ENCODE measurements at regions of chr11 and their contacts with region 1.

Region 1: GRCh38 chr11:122853971-122854446 is 15.7 kb downstream of the CRTAM start:
- DNase-seq: no peak
- ATAC-seq: no peak
- H3K4me3 ChIP-seq: no peak overlapping the region
- H3K27ac ChIP-seq: no peak overlapping the region
- H3K4me1 ChIP-seq: peaks cover 24% of the 10 kb centered on the region
- H3K27me3 ChIP-seq: no peaks in the 10 kb centered on the region
- CTCF ChIP-seq: peak; percentile 53 to 78 (median 73)
- EP300 ChIP-seq: no peak
- POLR2A ChIP-seq: no peak
- RAD21 ChIP-seq: peak; percentile 87

Region 2: GRCh38 chr11:122743949-122744348 is 110.1 kb before region 1 on chr11:
- CTCF ChIA-PET with region 1: interaction called, 38 read pairs
- POLR2A ChIA-PET with region 1: no interaction called
- RAD21 ChIA-PET with region 1: interaction called, 8 read pairs
- SMC1A ChIA-PET with region 1: interaction called, 30 read pairs
- in situ Hi-C with region 1: no loop called
- intact Hi-C with region 1: no loop called
- DNase-seq: peak; percentile 55
- ATAC-seq: peak; percentile 40
- H3K4me3 ChIP-seq: no peak overlapping the region
- H3K27ac ChIP-seq: peak overlapping the region; percentile 25; the same call in 1 of the 2 replicates
- H3K4me1 ChIP-seq: peaks cover 35% of the 10 kb centered on the region
- H3K27me3 ChIP-seq: peaks cover 0 to 2% of the 10 kb centered on the region in 2 experiments; a peak in 1 of 4 replicates
- CTCF ChIP-seq: no peak
- EP300 ChIP-seq: no peak; a peak in 1 of 4 replicates
- POLR2A ChIP-seq: peak; percentile 65; the same call in 1 of the 2 replicates
- RAD21 ChIP-seq: no peak

Region 3: GRCh38 chr11:122796128-122796717 is 57.8 kb before region 1 on chr11:
- CTCF ChIA-PET with region 1: interaction called, 490 read pairs
- POLR2A ChIA-PET with region 1: interaction called, 23 read pairs
- RAD21 ChIA-PET with region 1: interaction called, 254 read pairs
- SMC1A ChIA-PET with region 1: interaction called, 294 read pairs
- in situ Hi-C with region 1: loop called (anchors 5 kb)
- intact Hi-C with region 1: loop called (anchors 1 kb)
- DNase-seq: no peak
- ATAC-seq: peak; percentile 98
- H3K4me3 ChIP-seq: no peak overlapping the region
- H3K27ac ChIP-seq: no peak overlapping the region
- H3K4me1 ChIP-seq: no peaks in the 10 kb centered on the region
- H3K27me3 ChIP-seq: no peaks in the 10 kb centered on the region
- CTCF ChIP-seq: peak; percentile 92 to 96 (median 93)
- EP300 ChIP-seq: no peak
- POLR2A ChIP-seq: no peak
- RAD21 ChIP-seq: peak; percentile 92

Region 4: GRCh38 chr11:122832721-122833470 is 21.1 kb before region 1 on chr11:
- CTCF ChIA-PET with region 1: interaction called, 108 read pairs
- POLR2A ChIA-PET with region 1: interaction called, 10 read pairs
- RAD21 ChIA-PET with region 1: interaction called, 74 read pairs
- SMC1A ChIA-PET with region 1: interaction called, 138 read pairs
- in situ Hi-C with region 1: no loop called
- intact Hi-C with region 1: no loop called
- DNase-seq: no peak
- ATAC-seq: peak; percentile 50
- H3K4me3 ChIP-seq: no peak overlapping the region
- H3K27ac ChIP-seq: no peak overlapping the region
- H3K4me1 ChIP-seq: no peaks in the 10 kb centered on the region
- H3K27me3 ChIP-seq: no peaks in the 10 kb centered on the region
- CTCF ChIP-seq: no peak
- EP300 ChIP-seq: no peak
- POLR2A ChIP-seq: no peak
- RAD21 ChIP-seq: no peak

Region 5: DNA sequence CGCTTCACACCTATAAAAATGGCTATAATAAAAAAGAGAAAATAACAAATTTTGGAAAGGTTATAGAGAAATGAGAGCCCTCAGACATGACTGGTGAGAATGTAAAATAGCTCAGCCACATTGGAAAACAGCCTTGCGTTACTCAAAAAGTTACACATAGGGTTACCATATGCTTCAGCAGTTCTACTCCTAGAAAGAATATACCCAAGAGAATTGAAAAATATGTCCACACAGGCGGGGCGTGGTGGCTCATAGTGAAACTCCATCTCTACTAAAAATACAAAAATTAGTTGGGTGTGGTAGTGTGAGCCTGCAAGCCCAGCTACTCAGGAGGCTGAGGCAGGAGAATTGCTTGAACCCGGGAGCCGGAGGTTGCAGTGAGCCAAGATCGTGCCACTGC is 21.0 kb after region 1 on chr11:
- CTCF ChIA-PET with region 1: interaction called, 275 read pairs
- POLR2A ChIA-PET with region 1: interaction called, 12 read pairs
- RAD21 ChIA-PET with region 1: interaction called, 46 read pairs
- SMC1A ChIA-PET with region 1: interaction called, 466 read pairs
- in situ Hi-C with region 1: no loop called
- intact Hi-C with region 1: loop called (anchors 1 kb)
- DNase-seq: peak; percentile 52
- ATAC-seq: peak; percentile 79
- H3K4me3 ChIP-seq: 0 out of 2 replicates have a peak overlapping the region, but pooled peaks have one; percentile 25
- H3K27ac ChIP-seq: no peak overlapping the region
- H3K4me1 ChIP-seq: peaks cover 3% of the 10 kb centered on the region; the same call in 1 of the 2 replicates
- H3K27me3 ChIP-seq: no peaks in the 10 kb centered on the region
- CTCF ChIP-seq: no peak
- EP300 ChIP-seq: no peak
- POLR2A ChIP-seq: no peak
- RAD21 ChIP-seq: no peak

Region 6: DNA sequence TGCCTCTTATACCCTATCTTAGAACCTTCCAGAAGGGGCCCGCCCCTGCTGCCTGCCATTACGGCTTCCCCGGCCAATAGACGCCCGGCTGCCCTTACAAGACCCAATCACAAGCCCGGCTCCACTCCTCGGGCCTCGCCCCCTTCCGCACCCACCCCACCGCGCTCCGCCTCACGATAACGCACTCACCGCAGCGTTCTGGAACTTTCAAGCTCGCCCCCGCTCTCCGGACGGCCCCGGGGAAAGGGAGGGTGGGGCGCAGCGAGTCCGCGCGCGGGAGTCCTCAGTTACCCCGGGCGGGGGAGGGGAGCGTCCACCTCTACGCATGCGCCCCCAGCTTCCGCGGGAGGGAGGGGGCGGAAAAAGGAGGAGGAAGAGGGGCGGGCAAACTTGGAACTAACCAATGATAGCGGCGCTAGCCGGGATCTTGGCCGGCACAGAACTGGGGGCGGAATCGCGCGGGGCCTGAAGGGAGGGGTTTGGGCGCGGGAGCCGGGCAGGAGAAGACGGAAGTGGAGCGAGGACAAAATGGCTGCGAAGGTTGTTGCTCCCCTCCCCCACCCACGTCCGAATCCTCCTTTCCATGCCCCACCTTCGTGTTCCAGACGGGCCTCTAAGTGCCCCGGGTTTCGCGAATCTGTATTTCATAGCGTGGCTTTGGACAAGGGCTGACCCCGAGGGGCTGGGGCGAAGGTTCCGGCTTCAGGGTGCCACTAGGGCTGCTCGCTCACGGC is 208.3 kb after region 1 on chr11:
- CTCF ChIA-PET with region 1: interaction called, 387 read pairs
- POLR2A ChIA-PET with region 1: interaction called, 10 read pairs
- RAD21 ChIA-PET with region 1: interaction called, 50 read pairs
- SMC1A ChIA-PET with region 1: interaction called, 159 read pairs
- in situ Hi-C with region 1: no loop called
- intact Hi-C with region 1: no loop called
- DNase-seq: peak; percentile 97
- ATAC-seq: peak; percentile 90
- H3K4me3 ChIP-seq: peak overlapping the region; percentile 73
- H3K27ac ChIP-seq: peak overlapping the region; percentile 100
- H3K4me1 ChIP-seq: peaks cover 14% of the 10 kb centered on the region; the same call in 1 of the 2 replicates
- H3K27me3 ChIP-seq: no peaks in the 10 kb centered on the region
- CTCF ChIP-seq: no peak
- EP300 ChIP-seq: no peak
- POLR2A ChIP-seq: no peak; the same call in none of the 2 replicates
- RAD21 ChIP-seq: no peak

Measured in GM12878 (cell line).